ENCODE measurements at regions of chr10 and their contacts with region 1.

Region 1: DNA sequence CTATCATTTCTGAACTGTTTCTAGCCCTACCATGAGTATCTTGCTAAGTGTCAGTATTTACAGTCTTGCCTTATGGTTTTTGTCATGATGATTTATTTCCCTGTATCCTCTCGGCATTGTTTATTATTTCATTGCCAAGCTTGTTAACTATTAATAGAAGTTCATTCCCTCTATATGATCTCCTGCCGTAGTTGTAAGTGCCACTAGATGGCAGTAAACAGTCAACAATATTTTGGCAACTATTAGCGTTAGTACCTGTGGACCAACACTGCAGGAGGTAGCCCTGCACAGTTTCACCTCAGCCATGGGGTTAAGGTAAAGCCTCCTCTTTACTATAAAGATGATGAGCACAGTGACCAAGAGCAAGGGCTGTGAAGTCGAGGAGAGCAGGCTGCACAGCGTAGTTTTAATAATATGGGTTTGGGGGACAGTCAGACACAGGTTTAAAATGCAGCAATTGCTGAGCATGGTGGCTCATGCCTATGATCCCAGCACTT is 26.1 kb upstream of the CCNJ start:
- DNase-seq: peak in 1 of 2 donors; percentile 24
- ATAC-seq: peak in 7 of 8 donors; percentile 59 to 82 (median 71)
- H3K4me3 ChIP-seq: no peak overlapping the region
- H3K27ac ChIP-seq: no peak overlapping the region
- H3K4me1 ChIP-seq: peaks cover 0 to 6% (median 0%) of the 10 kb centered on the region in 9 donors
- H3K27me3 ChIP-seq: no peaks in the 10 kb centered on the region
- CTCF ChIP-seq: peak; percentile 56 to 85 (median 77)

Region 2: GRCh38 chr10:96073722-96074121 is 56.5 kb after region 1 on chr10:
- intact Hi-C with region 1: no loop called
- DNase-seq: no peak
- ATAC-seq: no peak
- H3K4me3 ChIP-seq: no peak overlapping the region
- H3K27ac ChIP-seq: no peak overlapping the region
- H3K4me1 ChIP-seq: peaks cover 0 to 3% (median 0%) of the 10 kb centered on the region in 9 donors
- H3K27me3 ChIP-seq: no peaks in the 10 kb centered on the region
- CTCF ChIP-seq: no peak

Region 3: DNA sequence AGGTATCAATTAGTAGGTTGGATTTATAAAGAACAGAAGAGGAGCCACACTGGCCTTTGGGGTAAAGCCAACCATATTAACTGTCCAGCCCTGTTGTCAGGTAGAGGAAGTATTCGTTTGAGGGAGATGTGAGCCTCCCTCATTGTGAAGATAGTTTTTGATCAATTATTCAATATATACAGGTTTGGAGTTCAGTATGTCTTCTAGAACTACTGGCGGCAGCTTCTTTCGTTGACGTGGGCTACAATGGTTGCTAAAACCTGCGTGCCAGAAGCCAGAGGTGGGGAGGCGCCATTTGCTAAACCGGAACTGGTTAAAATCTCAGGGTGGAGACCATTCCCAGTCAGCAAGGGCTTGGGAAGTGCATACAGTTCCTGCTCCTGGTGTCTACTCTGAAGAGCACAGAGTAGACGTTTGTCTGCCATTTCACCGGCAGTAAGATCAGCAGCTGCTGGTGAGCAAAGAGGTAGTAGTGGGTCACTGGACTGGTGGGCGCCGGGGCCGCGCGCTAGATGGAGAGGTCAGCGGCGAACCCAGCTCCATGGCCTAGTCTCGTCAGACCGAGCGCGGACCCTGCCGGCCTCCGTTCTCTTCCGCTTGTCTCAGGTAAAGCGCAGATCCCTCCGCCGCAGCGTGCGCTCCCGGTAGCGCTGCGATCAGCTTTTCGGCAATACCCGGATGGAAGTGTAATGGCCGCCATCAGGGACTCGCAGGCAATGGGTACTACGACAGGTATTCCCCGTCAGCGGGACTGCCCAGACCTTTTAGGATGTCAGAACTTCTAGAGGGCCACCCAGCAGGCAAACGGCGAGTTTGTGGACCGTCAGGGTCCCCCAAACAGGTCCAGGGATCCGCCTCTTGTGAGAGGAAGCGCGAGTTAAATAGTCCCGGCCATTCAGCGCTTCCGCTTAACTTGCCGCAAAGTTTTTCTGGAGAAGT is 112.4 kb after region 1 on chr10 and contains the start of gene ZNF518A:
- intact Hi-C with region 1: loop called in 2 of 10 experiments (anchors 10 kb)
- DNase-seq: peak; percentile 91 to 95
- ATAC-seq: peak; percentile 96 to 99 (median 98)
- H3K4me3 ChIP-seq: peak within 1 kb of the TSS; percentile 62 to 84 (median 76)
- H3K27ac ChIP-seq: peak within 1 kb of the TSS; percentile 84 to 100 (median 97)
- H3K4me1 ChIP-seq: peaks cover 0 to 25% (median 13%) of the 10 kb centered on the region in 9 donors
- H3K27me3 ChIP-seq: peaks cover 0 to 47% (median 42%) of the 10 kb centered on the region in 7 donors
- CTCF ChIP-seq: no peak
- total RNA-seq, gene ZNF518A: 11.0 to 15.0 (median 12.7) TPM

Region 4: GRCh38 chr10:96292971-96293920 is 276.0 kb after region 1 on chr10:
- intact Hi-C with region 1: loop called in 9 of 10 experiments (anchors 2 to 10 kb)
- DNase-seq: peak in 1 of 2 donors; percentile 15
- ATAC-seq: peak in 7 of 8 donors; percentile 64 to 86 (median 79)
- H3K4me3 ChIP-seq: no peak overlapping the region
- H3K27ac ChIP-seq: no peak overlapping the region
- H3K4me1 ChIP-seq: peaks cover 0 to 5% (median 0%) of the 10 kb centered on the region in 9 donors
- H3K27me3 ChIP-seq: peaks cover 0 to 68% (median 35%) of the 10 kb centered on the region in 7 donors
- CTCF ChIP-seq: peak; percentile 8 to 76 (median 64)

Region 5: GRCh38 chr10:96299383-96299782 is 282.1 kb after region 1 on chr10:
- intact Hi-C with region 1: loop called in 7 of 10 experiments (anchors 5 to 10 kb)
- DNase-seq: no peak
- ATAC-seq: no peak
- H3K4me3 ChIP-seq: peak overlapping the region in 1 of 10 donors; percentile 1
- H3K27ac ChIP-seq: no peak overlapping the region
- H3K4me1 ChIP-seq: peaks cover 0 to 8% (median 0%) of the 10 kb centered on the region in 9 donors
- H3K27me3 ChIP-seq: peaks cover 0 to 30% (median 22%) of the 10 kb centered on the region in 7 donors
- CTCF ChIP-seq: no peak

Region 6: DNA sequence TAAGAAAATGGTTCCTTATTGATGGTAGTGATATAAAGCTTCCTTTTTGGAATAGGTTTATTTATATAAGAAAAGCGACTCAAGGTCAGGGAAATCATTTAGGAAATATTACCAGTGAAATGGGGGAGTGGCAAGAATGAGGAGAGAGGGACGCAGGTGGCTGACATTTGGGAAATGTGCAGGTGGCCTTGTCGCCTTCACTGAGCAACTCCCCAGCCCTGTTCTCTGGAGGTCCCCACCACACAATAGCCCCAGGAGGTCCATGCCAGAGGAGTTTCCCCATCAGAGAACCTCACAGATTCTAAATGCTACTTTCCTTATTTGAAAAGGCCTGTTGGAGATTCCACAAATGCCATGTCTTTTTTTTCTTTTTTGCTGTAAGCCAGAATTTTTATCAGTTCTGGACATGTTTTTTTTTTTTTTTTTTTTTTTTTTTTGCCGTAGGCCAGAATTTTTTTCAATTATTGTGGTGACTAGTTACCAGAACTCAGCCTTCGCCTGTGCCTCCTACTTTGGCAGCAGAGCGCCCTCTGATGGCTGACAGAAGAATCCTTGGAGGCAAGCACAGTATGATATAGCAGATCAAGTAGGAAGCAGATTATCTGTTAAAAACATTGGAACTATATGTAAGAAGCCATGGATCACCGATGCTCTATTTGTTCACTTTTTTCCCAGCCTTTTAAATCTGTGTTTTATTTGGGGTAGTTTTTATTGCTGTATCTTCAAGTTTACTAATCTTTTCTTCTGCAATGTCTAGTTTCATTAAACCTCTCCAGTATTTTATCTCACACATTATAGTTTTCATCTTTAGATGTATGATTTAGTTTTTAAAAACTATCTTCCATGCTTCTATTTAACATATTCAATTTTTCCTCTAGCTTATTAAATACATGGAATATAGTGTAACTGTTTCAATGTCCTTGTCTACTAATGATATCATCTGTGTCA is 323.0 kb after region 1 on chr10:
- intact Hi-C with region 1: loop called in 1 of 10 experiments (anchors 5 kb)
- DNase-seq: peak; percentile 23 to 52
- ATAC-seq: peak in 6 of 8 donors; percentile 63 to 89 (median 75)
- H3K4me3 ChIP-seq: no peak overlapping the region
- H3K27ac ChIP-seq: no peak overlapping the region
- H3K4me1 ChIP-seq: peaks cover 0 to 3% (median 0%) of the 10 kb centered on the region in 9 donors
- H3K27me3 ChIP-seq: peaks cover 0 to 11% (median 0%) of the 10 kb centered on the region in 7 donors
- CTCF ChIP-seq: peak; percentile 7 to 74 (median 66)